Tibial artery (tissue), 4 donors: ENCODE measurements at regions of chr16 and their contacts with region 1.

Region 1: DNA sequence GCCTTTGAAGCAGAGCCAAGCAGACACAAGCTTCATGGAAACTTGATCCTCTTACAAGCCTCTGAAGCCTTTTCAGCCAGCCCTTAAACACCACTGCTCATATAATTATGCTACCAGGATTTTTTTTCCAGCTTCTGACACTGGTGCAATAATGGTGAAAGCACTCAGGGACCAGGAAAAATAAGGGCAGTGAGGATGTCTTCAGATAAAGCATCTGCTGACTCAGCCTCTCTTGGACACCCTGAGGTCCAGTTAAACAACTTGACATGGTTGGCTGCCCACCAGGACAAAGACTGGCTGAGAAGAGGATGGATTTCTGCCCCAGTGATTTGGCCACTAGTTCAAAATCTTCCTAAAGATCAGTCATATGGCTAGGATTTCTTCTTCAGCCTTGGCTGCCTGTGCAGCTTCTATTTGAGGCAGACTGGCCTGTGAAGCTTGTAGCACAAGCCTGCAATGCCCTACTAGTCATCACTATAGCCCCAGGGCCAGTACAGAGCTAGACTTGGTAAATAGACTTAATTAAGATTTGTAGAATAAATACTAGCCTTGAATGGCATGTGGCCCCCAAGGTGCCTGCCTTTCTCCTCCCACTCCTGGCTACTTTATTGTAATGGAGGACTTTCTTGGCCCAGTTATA is 124.4 kb upstream of the N4BP1 start:
- DNase-seq: no peak
- H3K4me3 ChIP-seq: no peak overlapping the region
- H3K27ac ChIP-seq: no peak overlapping the region
- H3K4me1 ChIP-seq: no peaks in the 10 kb centered on the region
- H3K27me3 ChIP-seq: no peaks in the 10 kb centered on the region
- CTCF ChIP-seq: no peak

Region 2: DNA sequence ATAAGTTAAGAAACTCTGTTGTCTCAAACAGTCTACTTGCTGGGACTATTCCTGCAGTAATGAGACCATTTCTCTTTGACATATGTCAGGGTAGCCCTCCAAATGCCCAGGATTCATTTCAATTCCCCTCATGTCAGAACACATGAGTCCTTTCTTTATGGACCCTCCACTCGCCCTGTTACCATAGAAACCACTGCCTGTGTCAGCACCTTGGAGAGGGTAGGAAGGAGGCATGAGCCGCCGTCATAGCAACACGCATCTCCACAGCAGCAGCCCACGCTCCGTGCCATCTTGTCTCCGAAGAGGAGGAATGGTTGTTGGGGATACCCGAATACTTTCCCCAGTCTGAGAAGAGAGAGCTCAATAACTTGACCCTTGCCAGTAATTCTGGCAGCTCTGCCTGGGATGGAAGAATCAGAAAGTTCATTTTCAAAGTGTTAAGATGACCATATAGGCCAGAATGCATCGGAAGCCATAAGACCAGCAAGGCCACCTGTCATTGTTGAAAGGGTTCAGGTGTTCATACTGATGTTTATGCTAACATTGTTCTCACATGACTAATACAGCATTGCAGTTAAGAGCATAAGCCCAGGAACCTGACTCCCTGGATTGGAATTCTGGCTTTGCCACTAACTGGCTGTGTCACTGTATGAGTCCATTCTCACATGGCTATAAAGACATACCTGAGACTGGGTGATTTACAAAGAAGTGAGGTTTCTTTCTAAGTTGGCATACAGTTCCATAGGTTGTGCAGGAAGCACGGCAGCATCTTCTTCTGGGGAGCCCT is 719.8 kb before region 1 on chr16:
- intact Hi-C with region 1: loop called (anchors 5 kb)
- DNase-seq: no peak
- H3K4me3 ChIP-seq: no peak overlapping the region
- H3K27ac ChIP-seq: no peak overlapping the region
- H3K4me1 ChIP-seq: no peaks in the 10 kb centered on the region
- H3K27me3 ChIP-seq: no peaks in the 10 kb centered on the region
- CTCF ChIP-seq: no peak

Region 3: DNA sequence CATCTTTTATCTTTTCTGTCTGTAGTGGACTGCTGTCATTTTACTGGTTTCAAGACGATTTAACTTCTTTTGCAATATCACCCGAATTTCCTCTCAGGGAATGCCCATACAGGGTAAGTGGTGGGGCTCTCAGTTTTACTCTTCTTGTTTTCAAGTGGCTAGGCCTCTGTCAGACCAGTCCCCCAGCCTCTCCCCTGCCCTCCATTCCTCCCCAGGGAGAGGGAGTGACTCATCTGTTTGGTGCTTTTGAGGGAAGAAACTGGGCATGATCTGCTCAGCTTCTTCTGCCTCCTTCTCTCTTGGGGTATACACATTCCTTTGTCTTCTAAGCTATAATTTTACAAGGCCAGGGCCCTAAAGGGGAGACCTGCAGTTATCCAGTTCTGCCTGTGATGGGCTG is 215.3 kb after region 1 on chr16:
- intact Hi-C with region 1: no loop called
- DNase-seq: no peak
- H3K4me3 ChIP-seq: no peak overlapping the region
- H3K27ac ChIP-seq: no peak overlapping the region
- H3K4me1 ChIP-seq: no peaks in the 10 kb centered on the region
- H3K27me3 ChIP-seq: no peaks in the 10 kb centered on the region
- CTCF ChIP-seq: no peak